ENCODE measurements at regions of chr11 and their contacts with region 1.

Region 1: GRCh38 chr11:123054301-123055065 is 7.5 kb downstream of the HSPA8 start:
- DNase-seq: peak; percentile 53 to 75 (median 64)
- ATAC-seq: peak; percentile 92
- H3K4me3 ChIP-seq: no peak overlapping the region
- H3K27ac ChIP-seq: no peak overlapping the region
- H3K4me1 ChIP-seq: peaks cover 0 to 11% of the 10 kb centered on the region in 2 experiments; a peak in 2 of 5 replicates
- H3K27me3 ChIP-seq: peaks cover 0 to 2% of the 10 kb centered on the region in 2 experiments; a peak in 1 of 5 replicates
- CTCF ChIP-seq: peak; percentile 53 to 79 (median 64); a peak in 5 of 6 replicates
- EP300 ChIP-seq: no peak
- POLR2A ChIP-seq: peak; percentile 13; the same call in 1 of the 2 replicates
- RAD21 ChIP-seq: peak; percentile 24 to 52; a peak in 3 of 4 replicates

Region 2: DNA sequence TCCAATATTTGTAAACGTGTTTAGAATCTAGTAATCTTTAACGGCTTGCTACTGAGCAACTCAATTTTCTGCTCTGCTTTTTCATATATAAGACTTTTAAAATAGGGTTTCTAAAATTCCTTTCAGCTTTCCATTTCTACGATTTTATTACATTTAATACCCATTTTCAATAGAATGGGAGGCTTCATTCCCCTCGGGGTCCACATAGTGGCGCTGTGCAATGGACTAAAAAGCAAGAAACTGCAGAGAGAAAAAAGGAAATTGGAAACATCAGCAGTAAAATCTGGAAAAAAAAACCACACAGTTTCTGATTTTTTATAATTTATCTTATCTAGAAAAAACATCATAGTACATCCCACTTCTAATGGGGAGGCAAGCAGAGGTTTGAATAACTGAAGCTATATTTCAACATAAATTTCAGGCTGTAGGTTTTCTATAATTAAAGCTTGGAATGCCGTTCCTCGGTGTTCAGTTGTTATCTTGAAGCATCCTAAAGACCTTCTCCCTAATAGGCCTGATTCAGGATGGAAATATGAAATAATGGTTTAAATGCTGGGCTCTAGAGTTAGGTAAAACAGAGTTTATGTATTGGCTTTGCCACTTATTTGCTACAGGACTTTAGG is 190.7 kb before region 1 on chr11:
- CTCF ChIA-PET with region 1: no interaction called
- POLR2A ChIA-PET with region 1: no interaction called
- in situ Hi-C with region 1: no loop called
- intact Hi-C with region 1: loop called (anchors 1 kb)
- DNase-seq: peak; percentile 30 to 42 (median 36)
- ATAC-seq: peak; percentile 67; the same call in 2 of the 3 replicates
- H3K4me3 ChIP-seq: no peak overlapping the region
- H3K27ac ChIP-seq: no peak overlapping the region
- H3K4me1 ChIP-seq: no peaks in the 10 kb centered on the region
- H3K27me3 ChIP-seq: no peaks in the 10 kb centered on the region; a peak in 1 of 5 replicates
- CTCF ChIP-seq: peak; percentile 59 to 77 (median 62); a peak in 5 of 6 replicates
- EP300 ChIP-seq: no peak
- POLR2A ChIP-seq: no peak
- RAD21 ChIP-seq: peak; percentile 58 to 60

Measured in K562 (cell line).